HEK293 (cell line): ENCODE measurements at regions of chr17 and their contacts with region 1.

Region 1: DNA sequence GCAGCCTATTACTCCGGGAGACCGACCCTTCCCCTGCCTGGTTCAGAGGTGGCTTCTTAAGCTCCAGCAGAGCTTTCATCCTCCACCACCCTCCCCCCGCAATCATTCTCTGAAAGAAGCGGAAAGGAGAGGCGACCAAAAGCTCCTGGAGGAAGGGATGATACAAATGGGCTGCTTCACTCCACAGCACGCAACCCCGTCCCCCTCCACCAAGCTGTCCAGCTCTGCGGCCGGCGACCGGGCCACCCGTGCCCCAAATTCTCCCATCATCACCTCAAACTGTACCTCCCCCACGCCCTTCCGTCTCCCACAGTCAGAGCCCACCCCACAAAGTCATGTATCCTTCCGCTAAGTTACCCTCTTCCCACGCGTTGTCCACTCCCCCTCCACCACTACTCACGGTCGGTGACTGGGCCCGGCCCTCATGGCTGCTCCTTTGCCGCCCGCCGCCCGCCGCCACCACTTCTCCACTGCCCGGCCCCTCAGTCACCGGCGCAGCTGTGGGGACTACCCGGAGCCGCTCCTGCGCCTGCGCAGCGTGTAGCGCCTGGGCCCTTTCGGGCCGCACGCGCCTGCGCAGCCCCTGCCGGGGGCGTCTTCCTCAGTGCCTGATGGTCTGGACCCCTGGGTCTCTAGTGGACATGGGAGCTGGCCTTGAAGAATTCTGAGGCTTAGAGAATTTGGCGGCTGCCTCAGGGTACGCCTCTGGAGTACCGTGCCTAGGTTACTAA is at the start of gene FAM222B:
- H3K4me3 ChIP-seq: peak within 1 kb of the TSS; percentile 95
- H3K27ac ChIP-seq: peak within 1 kb of the TSS; percentile 77
- H3K4me1 ChIP-seq: 0 out of 2 replicates have a peak, but pooled peaks cover 2% of the 10 kb centered on the region
- CTCF ChIP-seq: peak; percentile 31

Region 2: DNA sequence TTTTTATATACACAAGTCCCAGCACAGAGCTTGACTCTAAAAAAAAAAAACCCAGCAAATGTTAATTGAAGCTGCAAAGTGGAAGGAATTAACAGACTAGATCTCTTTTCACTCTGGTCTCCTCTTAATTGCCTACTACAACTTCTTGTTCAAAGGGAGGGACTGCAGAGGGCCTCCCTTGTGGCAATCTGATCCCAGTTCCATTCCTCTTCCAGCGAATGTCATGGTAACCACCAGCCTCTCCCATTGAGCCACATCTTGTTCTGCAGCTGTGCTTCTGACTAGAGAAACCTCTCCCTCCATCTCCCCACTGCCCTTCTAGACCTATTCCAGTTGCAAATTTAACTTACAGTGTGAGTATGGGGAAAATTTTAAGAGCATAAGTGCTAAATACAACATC is 174.6 kb before region 1 on chr17:
- CTCF ChIA-PET with region 1: no interaction called
- POLR2A ChIA-PET with region 1: no interaction called
- H3K4me3 ChIP-seq: no peak overlapping the region
- H3K27ac ChIP-seq: no peak overlapping the region
- H3K4me1 ChIP-seq: peaks cover 4% of the 10 kb centered on the region; the same call in 1 of the 2 replicates
- CTCF ChIP-seq: no peak

Region 3: GRCh38 chr17:28717578-28718333 is 124.7 kb before region 1 on chr17 and contains the start of gene RAB34:
- CTCF ChIA-PET with region 1: no interaction called
- POLR2A ChIA-PET with region 1: interaction called, 11 read pairs
- H3K4me3 ChIP-seq: peak within 1 kb of the TSS; percentile 67
- H3K27ac ChIP-seq: peak within 1 kb of the TSS; percentile 95
- H3K4me1 ChIP-seq: peaks cover 16% of the 10 kb centered on the region
- CTCF ChIP-seq: peak; percentile 87

Region 4: DNA sequence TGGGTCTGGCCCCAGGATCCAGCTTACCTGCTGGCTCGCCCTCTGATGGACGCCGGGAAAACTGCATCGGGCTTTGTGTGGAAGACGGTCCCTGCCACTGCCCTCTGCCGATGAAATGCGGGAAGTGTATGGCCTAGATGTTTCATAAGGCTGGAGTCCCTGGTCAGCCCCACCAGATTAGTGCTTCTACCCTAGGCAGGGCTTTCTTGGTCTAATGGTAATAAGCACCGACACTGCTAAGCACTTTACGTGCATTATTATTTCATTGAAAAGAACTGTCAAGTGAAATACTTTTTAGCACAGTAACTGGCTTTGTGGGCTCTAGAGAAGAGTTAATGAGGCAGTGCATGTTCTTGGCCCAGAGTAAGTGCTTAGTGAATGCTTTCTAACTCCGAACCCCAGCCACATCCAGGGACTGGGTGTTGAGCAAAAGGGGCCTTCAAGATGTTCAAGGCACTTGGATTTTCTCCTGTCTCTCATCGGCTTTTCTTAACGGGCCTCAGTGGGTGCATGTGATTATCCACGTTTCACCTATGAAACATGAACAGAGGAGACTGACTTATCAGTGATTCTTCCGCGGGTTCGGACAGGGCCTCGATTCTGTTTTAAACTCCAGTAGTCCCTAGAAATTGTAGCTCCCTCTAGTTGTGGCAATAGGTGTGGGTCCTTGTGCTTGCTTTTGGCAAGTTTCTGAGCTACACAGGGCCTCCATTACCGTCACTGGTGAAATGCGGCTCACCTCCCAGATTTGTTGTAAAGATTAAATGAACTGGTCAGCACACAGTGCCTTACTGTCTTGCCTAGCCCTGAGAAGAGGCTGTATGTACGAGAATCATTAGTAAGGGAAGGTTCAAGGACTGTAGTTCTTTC is 92.0 kb before region 1 on chr17:
- CTCF ChIA-PET with region 1: interaction called, 11 read pairs
- POLR2A ChIA-PET with region 1: interaction called, 12 read pairs
- H3K4me3 ChIP-seq: no peak overlapping the region
- H3K27ac ChIP-seq: 0 out of 2 replicates have a peak overlapping the region, but pooled peaks have one; percentile 12
- H3K4me1 ChIP-seq: peaks cover 8% of the 10 kb centered on the region; the same call in 1 of the 2 replicates
- CTCF ChIP-seq: peak; percentile 96

Region 5: DNA sequence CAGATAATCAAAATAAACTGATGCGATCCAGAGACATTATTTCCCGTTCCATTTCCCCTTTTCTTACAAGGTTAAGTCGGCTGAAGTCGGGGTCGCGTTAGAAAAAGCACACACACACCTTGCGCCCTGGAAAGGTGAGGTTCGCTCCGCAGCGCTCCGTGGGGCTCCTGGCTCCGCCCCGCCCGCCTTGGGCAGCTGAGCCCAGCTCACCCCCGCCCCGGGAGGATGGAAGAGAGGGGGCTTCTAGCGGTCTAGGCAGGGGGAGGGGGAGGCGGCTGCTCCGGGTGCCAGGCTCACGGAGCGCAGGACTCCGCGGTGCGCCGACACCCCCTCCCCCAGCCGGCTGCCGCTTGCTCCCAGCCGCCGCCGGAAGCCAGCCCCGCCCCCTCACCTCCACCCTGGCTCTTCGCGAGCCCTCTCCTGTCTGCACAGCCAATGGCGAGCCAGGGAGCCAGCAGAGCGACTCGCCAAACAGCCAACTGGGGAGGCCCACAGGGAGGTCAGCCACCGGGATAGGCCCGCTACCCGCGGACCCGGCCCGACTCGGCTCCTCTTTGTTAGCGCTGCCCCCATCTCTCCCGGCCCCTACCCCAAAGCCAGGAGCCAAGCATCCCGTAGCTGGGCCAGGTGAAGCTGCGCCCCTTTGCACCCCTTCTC is 30.2 kb before region 1 on chr17:
- CTCF ChIA-PET with region 1: interaction called, 5 read pairs
- POLR2A ChIA-PET with region 1: interaction called, 20 read pairs
- H3K4me3 ChIP-seq: peak overlapping the region; percentile 94
- H3K27ac ChIP-seq: peak overlapping the region; percentile 81
- H3K4me1 ChIP-seq: peaks cover 22% of the 10 kb centered on the region
- CTCF ChIP-seq: no peak

Region 6: DNA sequence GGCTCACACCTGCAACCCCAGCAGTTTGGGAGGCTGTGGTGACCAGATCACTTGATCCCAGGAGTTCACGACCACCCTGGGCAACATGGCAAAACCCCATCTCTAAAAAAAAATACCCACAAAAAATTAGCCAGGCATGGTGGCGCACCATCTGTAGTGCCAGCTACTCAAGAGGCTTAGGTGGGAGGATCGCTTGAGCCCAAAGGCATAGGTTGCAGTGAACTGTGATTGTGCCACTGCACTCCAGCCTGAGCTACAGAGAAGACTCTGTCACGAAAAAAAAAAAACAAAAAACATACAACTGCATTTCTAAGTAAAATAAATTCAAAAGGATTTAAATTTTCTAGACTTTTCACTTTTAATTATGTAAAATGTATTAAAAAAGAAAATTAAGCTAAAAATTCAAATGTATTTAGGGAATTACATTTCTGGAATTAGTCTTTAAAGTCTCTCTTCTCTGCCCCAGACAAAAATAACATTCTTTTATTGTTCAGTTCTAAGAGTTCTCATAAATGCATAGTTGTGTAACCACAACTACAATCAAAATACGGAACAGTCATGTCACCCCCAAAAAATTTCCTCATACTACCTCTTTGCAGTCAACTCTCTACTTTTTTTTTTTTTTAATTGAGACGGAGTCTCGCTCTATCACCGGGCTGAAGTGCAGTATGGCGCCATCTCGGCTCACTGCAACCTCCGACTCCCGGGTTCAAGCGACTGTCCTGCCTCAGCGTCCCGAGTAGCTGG is 14.0 kb before region 1 on chr17:
- CTCF ChIA-PET with region 1: interaction called, 5 read pairs
- POLR2A ChIA-PET with region 1: interaction called, 11 read pairs
- H3K4me3 ChIP-seq: no peak overlapping the region
- H3K27ac ChIP-seq: no peak overlapping the region
- H3K4me1 ChIP-seq: 0 out of 2 replicates have a peak, but pooled peaks cover 2% of the 10 kb centered on the region
- CTCF ChIP-seq: no peak

Region 7: GRCh38 chr17:28854457-28855350 is 12.3 kb after region 1 on chr17 and contains the start of gene ERAL1:
- CTCF ChIA-PET with region 1: interaction called, 3 read pairs
- POLR2A ChIA-PET with region 1: interaction called, 11 read pairs
- H3K4me3 ChIP-seq: peak within 1 kb of the TSS; percentile 75
- H3K27ac ChIP-seq: peak within 1 kb of the TSS; percentile 50
- H3K4me1 ChIP-seq: peaks cover 4% of the 10 kb centered on the region; the same call in 1 of the 2 replicates
- CTCF ChIP-seq: peak; percentile 57

Region 8: DNA sequence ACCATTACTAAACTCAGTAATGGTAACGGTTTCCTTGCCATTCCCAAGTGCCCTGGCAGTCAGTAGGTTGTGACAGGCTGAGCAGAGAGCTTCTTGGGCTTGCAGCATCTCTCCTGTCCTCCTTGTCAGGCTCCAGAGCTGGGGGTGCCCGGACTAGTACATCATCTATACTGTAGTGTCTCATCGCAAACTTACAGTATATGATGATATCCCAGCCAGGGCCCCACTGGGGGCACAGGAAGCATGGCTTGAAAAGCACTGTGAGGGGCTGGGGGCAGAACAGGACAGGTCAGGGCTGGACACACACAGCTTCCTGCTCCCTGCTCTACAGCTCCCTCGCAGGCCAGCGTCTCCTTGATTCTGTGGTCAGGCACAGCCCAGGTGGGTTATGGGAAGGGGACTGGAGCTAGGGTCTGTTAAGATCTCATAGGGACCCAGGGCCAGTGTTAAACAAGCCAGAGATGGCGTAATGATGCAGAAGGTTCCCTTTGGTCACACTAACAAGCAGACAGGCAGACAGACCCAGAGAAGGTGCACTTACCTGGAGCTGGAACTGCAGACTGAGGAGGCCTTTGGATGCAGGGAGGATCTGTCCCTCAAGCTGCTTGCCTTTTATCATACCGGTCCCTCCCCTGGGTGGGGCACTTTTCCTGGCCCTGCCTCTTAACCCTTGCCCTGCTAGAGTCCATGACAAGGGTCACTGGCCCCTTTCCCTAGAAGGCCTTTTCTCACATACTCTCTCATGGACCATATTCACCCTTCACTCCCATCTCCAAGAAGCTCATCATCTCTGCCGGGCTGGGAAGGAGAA is 19.2 kb after region 1 on chr17:
- CTCF ChIA-PET with region 1: interaction called, 3 read pairs
- POLR2A ChIA-PET with region 1: interaction called, 11 read pairs
- H3K4me3 ChIP-seq: no peak overlapping the region
- H3K27ac ChIP-seq: no peak overlapping the region
- H3K4me1 ChIP-seq: no peaks in the 10 kb centered on the region
- CTCF ChIP-seq: no peak